Activated B cell treated with CpG ODN at 0.5 μM for 24 hours (primary cell): ENCODE measurements at regions of chr6 and their contacts with region 1.

Region 1: GRCh38 chr6:113805173-113805790 is 51.9 kb upstream of the MARCKS start:
- DNase-seq: no peak
- ATAC-seq: peak; percentile 53
- H3K4me3 Mint-ChIP-seq: peak overlapping the region; percentile 52
- H3K27ac Mint-ChIP-seq: peak overlapping the region; percentile 67
- H3K4me1 Mint-ChIP-seq: peaks cover 56% of the 10 kb centered on the region
- H3K27me3 Mint-ChIP-seq: no peaks in the 10 kb centered on the region
- CTCF ChIP-seq: no peak

Region 2: DNA sequence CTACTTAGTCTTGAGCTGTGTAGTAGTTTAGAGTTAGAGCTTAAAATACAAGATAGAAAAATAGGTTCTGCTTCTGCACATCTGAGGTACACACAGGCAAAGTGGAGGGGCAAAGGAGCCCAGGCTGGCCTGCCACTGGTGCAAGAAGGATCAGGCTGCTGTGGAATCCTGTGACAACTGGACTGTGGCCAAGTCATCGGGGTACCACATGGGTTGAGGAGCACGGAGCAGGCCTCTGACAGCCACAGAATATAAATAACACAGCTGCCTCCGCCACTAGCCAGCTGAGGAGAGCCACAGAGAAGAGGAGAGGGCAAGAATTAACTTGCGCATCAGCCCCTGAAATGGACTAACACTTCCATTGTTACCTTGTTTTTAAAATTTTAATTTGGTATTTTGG is 154.2 kb before region 1 on chr6:
- CTCF ChIA-PET with region 1: no interaction called
- POLR2A ChIA-PET with region 1: interaction called, 11 read pairs
- intact Hi-C with region 1: no loop called
- DNase-seq: no peak
- ATAC-seq: no peak
- H3K4me3 Mint-ChIP-seq: peak overlapping the region; percentile 19
- H3K27ac Mint-ChIP-seq: no peak overlapping the region
- H3K4me1 Mint-ChIP-seq: peaks cover 72% of the 10 kb centered on the region
- H3K27me3 Mint-ChIP-seq: no peaks in the 10 kb centered on the region
- CTCF ChIP-seq: no peak

Region 3: DNA sequence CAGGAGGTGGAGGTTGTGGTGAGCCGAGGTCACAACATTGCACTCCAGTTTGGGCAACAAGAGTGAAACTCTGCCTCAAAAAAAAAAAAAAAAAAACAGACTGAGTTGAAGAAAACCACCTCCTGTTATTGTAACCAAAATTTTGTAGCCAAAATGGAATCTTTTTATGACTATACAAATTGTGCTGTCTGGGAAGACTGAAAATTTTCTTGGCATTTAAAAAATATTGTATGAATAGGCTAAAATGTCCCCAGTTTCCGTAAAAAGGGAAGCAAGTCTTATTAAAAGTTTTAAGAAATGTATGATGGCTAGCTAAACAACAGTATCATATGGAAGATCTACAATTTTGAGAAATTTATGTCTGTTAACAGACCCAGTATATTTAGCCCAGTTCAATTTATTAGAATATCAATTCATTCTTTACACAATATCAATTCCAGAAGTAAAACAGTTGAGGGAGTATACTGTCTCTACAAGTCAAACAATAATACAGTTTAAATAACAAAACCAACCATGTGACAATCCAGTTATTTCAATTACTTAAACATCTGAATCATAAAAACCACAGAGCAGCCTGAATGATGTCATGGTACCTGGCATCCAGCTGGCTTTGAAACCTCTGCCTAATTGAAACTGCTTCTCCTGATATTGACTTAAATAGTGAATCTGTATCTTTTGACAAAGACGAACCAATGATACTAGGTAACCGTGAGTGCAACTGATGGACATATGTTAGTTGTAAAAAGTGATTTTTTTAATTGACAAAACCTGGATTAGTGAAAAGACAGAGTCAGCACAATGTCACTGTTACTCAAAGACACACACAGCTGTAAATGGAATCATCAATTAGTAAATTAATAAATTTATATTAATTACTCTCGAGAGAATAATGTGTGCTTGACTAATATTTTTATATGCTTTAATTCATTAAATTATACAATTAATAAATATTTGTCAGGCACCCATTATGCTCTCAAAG is 114.7 kb before region 1 on chr6:
- CTCF ChIA-PET with region 1: no interaction called
- POLR2A ChIA-PET with region 1: interaction called, 4 read pairs
- intact Hi-C with region 1: loop called (anchors 2 kb)
- DNase-seq: no peak
- ATAC-seq: peak; percentile 71
- H3K4me3 Mint-ChIP-seq: peak overlapping the region; percentile 19
- H3K27ac Mint-ChIP-seq: peak overlapping the region; percentile 46
- H3K4me1 Mint-ChIP-seq: peaks cover 23% of the 10 kb centered on the region
- H3K27me3 Mint-ChIP-seq: no peaks in the 10 kb centered on the region
- CTCF ChIP-seq: no peak

Region 4: DNA sequence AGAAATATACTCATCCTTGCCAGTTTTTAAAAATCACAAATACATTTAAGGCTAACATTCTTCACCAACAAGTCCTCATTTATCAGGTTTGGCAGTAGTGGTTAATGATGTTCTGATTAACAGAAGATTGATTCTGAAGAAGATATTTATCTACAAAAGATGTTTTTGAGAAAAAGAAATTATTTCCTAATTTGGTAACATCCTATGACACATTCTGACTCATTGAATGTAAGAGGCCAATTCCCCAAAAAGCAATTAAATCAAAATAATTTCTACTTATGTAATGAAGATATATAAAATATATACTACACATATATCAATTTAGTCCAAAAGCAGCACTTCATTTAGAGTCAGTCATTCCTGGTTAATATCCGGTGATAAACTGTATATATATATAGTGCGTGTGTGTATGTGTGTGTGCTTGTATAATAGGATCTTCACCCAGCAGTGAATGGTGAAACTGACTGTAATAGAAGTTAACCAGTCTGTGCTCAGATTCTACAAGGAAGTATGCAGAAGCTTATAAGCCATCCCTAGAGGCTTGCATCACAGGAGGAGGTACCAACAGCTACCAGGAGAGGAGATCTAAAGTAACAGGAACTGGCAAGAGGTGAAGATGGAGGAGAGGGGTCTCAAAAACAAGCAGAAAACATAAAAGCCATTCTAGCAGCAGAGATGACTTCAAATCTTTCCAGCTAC is 31.0 kb before region 1 on chr6:
- CTCF ChIA-PET with region 1: no interaction called
- POLR2A ChIA-PET with region 1: no interaction called
- intact Hi-C with region 1: loop called (anchors 2 kb)
- DNase-seq: no peak
- ATAC-seq: peak; percentile 83
- H3K4me3 Mint-ChIP-seq: no peak overlapping the region
- H3K27ac Mint-ChIP-seq: peak overlapping the region; percentile 2
- H3K4me1 Mint-ChIP-seq: peaks cover 6% of the 10 kb centered on the region
- H3K27me3 Mint-ChIP-seq: no peaks in the 10 kb centered on the region
- CTCF ChIP-seq: no peak

Region 5: GRCh38 chr6:113924312-113924723 is 119.0 kb after region 1 on chr6:
- CTCF ChIA-PET with region 1: no interaction called
- POLR2A ChIA-PET with region 1: no interaction called
- intact Hi-C with region 1: no loop called
- DNase-seq: no peak
- ATAC-seq: no peak
- H3K4me3 Mint-ChIP-seq: no peak overlapping the region
- H3K27ac Mint-ChIP-seq: no peak overlapping the region
- H3K4me1 Mint-ChIP-seq: peaks cover 3% of the 10 kb centered on the region
- H3K27me3 Mint-ChIP-seq: no peaks in the 10 kb centered on the region
- CTCF ChIP-seq: no peak

Region 6: GRCh38 chr6:113970805-113971676 is 165.8 kb after region 1 on chr6 and contains the start of gene HDAC2:
- CTCF ChIA-PET with region 1: no interaction called
- POLR2A ChIA-PET with region 1: no interaction called
- intact Hi-C with region 1: loop called (anchors 2 kb)
- DNase-seq: peak; percentile 88
- ATAC-seq: peak; percentile 83
- H3K4me3 Mint-ChIP-seq: peak within 1 kb of the TSS; percentile 99
- H3K27ac Mint-ChIP-seq: peak within 1 kb of the TSS; percentile 98
- H3K4me1 Mint-ChIP-seq: peaks cover 36% of the 10 kb centered on the region
- H3K27me3 Mint-ChIP-seq: no peaks in the 10 kb centered on the region
- CTCF ChIP-seq: no peak
- total RNA-seq, gene HDAC2: 60.0 and 68.4 TPM in 2 replicates